ENCODE measurements at regions of chr14 and their contacts with region 1.

Region 1: DNA sequence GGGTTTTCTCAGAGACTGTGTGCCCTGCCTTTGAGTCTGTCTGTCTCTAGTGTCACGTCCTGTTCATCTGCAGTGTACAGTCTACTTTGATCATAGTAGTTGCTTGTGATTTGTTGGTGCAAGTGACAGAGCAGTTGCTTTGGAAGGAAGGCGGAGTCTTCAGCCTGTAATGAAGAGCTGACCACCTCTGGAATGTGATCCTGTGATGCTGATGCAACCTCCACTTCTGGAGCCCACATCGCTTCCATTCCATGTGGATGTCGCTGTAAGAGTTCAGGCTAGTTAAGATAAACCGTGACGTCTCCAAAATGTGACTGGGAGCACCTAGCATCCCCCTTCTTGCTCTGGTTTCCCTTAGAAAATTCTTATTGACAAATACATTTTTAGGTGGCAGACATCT is 51.8 kb downstream of the PELI2 start:
- DNase-seq: no peak
- H3K4me3 ChIP-seq: no peak overlapping the region
- H3K27ac ChIP-seq: no peak overlapping the region
- H3K4me1 ChIP-seq: no peaks in the 10 kb centered on the region
- H3K27me3 ChIP-seq: no peaks in the 10 kb centered on the region
- CTCF ChIP-seq: no peak

Region 2: GRCh38 chr14:56087671-56088471 is 82.2 kb before region 1 on chr14:
- CTCF ChIA-PET with region 1: no interaction called
- POLR2A ChIA-PET with region 1: no interaction called
- intact Hi-C with region 1: loop called (anchors 2 kb)
- DNase-seq: no peak
- H3K4me3 ChIP-seq: no peak overlapping the region
- H3K27ac ChIP-seq: no peak overlapping the region
- H3K4me1 ChIP-seq: no peaks in the 10 kb centered on the region
- H3K27me3 ChIP-seq: no peaks in the 10 kb centered on the region
- CTCF ChIP-seq: no peak

Measured in A673 (cell line).